ENCODE measurements at regions of chr5 and their contacts with region 1.

Region 1: DNA sequence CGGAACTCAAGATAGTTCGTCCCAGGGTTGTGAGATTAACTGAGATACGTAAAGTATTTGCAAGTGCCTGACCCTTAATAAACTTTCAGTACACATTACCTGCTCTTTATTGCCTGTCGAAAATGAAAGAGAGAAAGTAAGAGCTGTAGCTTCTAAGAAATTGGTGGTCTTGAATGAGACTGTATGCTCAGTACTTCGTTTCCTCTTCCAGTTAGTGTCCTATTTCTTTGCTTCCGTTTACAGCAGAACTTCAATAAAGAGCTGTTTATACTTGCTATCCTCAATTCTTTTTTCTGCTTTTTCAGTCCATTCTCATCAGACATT is 534 bp downstream of the SRFBP1 start:
- DNase-seq: no peak
- H3K4me3 ChIP-seq: peak overlapping the region; percentile 77
- H3K4me3 Mint-ChIP-seq: peak overlapping the region; percentile 84
- H3K27ac Mint-ChIP-seq: peak overlapping the region; percentile 93
- H3K4me1 ChIP-seq: no peaks in the 10 kb centered on the region
- H3K4me1 Mint-ChIP-seq: peaks cover 12% of the 10 kb centered on the region
- H3K27me3 ChIP-seq: no peaks in the 10 kb centered on the region
- H3K27me3 Mint-ChIP-seq: peaks cover 6% of the 10 kb centered on the region
- CTCF ChIP-seq: no peak

Region 2: GRCh38 chr5:122035913-122036312 is 73.6 kb after region 1 on chr5:
- CTCF ChIA-PET with region 1: interaction called, 3 read pairs
- POLR2A ChIA-PET with region 1: interaction called, 9 read pairs
- intact Hi-C with region 1: loop called (anchors 1 kb)
- DNase-seq: peak; percentile 82 to 92
- H3K4me3 ChIP-seq: no peak overlapping the region
- H3K4me3 Mint-ChIP-seq: peak overlapping the region; percentile 50
- H3K27ac Mint-ChIP-seq: peak overlapping the region; percentile 31
- H3K4me1 ChIP-seq: peaks cover 63% of the 10 kb centered on the region
- H3K4me1 Mint-ChIP-seq: peaks cover 76% of the 10 kb centered on the region
- H3K27me3 ChIP-seq: no peaks in the 10 kb centered on the region
- H3K27me3 Mint-ChIP-seq: no peaks in the 10 kb centered on the region
- CTCF ChIP-seq: no peak

Region 3: DNA sequence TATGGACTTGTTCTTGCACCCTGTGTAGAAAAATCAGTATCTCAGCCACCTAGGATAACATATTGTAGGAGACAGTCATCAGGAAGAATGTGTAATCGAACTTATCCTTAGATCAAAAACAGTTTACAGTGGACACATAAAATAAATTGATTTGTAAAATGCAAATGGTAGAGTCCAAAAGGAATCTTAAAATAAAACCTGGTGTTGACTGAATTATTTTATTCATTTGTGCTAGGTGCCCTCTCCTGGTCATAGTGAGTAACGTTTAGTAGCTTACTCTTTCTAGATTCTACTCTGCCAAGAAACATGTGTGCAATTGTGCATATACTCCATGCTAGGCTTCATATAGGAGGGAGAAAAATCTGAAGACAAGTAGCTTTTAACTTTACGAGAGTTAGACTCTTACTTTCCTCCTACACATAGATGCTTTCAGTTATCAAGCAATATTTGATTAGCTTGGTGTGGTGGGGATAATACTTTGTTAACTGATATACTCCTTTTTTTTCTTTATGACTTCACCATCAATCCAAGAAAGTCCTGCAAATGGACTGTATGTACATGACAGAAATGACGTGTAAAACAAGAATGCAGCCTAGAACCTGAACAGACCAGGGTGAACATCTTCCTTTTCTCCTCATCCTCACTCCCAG is 139.5 kb after region 1 on chr5:
- CTCF ChIA-PET with region 1: interaction called, 7 read pairs
- POLR2A ChIA-PET with region 1: no interaction called
- intact Hi-C with region 1: loop called (anchors 1 kb)
- DNase-seq: peak in 1 of 2 experiments; percentile 22
- H3K4me3 ChIP-seq: no peak overlapping the region
- H3K4me3 Mint-ChIP-seq: no peak overlapping the region
- H3K27ac Mint-ChIP-seq: no peak overlapping the region
- H3K4me1 ChIP-seq: no peaks in the 10 kb centered on the region
- H3K4me1 Mint-ChIP-seq: no peaks in the 10 kb centered on the region
- H3K27me3 ChIP-seq: no peaks in the 10 kb centered on the region
- H3K27me3 Mint-ChIP-seq: peaks cover 3% of the 10 kb centered on the region
- CTCF ChIP-seq: peak; percentile 51 to 64

Region 4: GRCh38 chr5:122156724-122157325 is 194.5 kb after region 1 on chr5:
- CTCF ChIA-PET with region 1: no interaction called
- POLR2A ChIA-PET with region 1: no interaction called
- intact Hi-C with region 1: loop called (anchors 1 kb)
- DNase-seq: peak in 1 of 2 experiments; percentile 14
- H3K4me3 ChIP-seq: no peak overlapping the region
- H3K4me3 Mint-ChIP-seq: no peak overlapping the region
- H3K27ac Mint-ChIP-seq: no peak overlapping the region
- H3K4me1 ChIP-seq: no peaks in the 10 kb centered on the region
- H3K4me1 Mint-ChIP-seq: no peaks in the 10 kb centered on the region
- H3K27me3 ChIP-seq: no peaks in the 10 kb centered on the region
- H3K27me3 Mint-ChIP-seq: peaks cover 12% of the 10 kb centered on the region
- CTCF ChIP-seq: peak; percentile 17 to 30

Region 5: GRCh38 chr5:122311961-122312590 is 349.8 kb after region 1 on chr5 and contains the start of gene SNCAIP:
- CTCF ChIA-PET with region 1: no interaction called
- POLR2A ChIA-PET with region 1: no interaction called
- intact Hi-C with region 1: loop called (anchors 5 kb)
- DNase-seq: peak; percentile 56 to 63
- H3K4me3 ChIP-seq: peak within 1 kb of the TSS; percentile 43
- H3K4me3 Mint-ChIP-seq: peak within 1 kb of the TSS; percentile 75
- H3K27ac Mint-ChIP-seq: no peak within 1 kb of the TSS
- H3K4me1 ChIP-seq: no peaks in the 10 kb centered on the region
- H3K4me1 Mint-ChIP-seq: peaks cover 9% of the 10 kb centered on the region
- H3K27me3 ChIP-seq: no peaks in the 10 kb centered on the region
- H3K27me3 Mint-ChIP-seq: peaks cover 6% of the 10 kb centered on the region
- CTCF ChIP-seq: no peak
- total RNA-seq, gene SNCAIP: 1.0 and 1.2 TPM in 2 replicates

Measured in Caco-2 (cell line).